ENCODE measurements at regions of chr6 and their contacts with region 1.

Region 1: DNA sequence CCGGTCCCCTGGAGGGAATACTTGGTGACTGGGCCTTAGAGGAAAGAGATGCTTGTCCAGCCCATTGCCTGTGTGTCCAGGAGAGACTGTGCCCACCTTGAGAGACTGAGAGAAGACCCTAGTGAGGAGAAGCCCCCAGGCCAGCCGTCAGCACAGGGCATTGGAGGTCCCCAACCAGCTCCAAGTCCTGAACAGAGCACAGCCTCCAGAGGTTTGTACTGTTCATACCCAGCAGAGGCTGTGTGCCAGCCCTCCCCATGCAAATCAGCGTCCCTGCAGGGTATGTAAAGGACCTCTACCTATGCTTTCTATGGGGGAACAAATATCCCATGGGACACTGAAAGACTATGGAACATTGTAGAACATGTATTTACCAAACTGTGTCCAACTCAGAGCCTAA is 8.4 kb downstream of the HLA-E start:
- DNase-seq: peak in 1 of 4 experiments; percentile 13
- ATAC-seq: no peak
- H3K4me3 ChIP-seq: no peak overlapping the region
- H3K27ac ChIP-seq: no peak overlapping the region
- H3K4me1 ChIP-seq: peaks cover 17 to 29% of the 10 kb centered on the region in 2 experiments
- H3K27me3 ChIP-seq: no peaks in the 10 kb centered on the region
- CTCF ChIP-seq: no peak
- EP300 ChIP-seq: no peak
- POLR2A ChIP-seq: no peak
- RAD21 ChIP-seq: no peak

Region 2: GRCh38 chr6:30515932-30516753 is 18.4 kb after region 1 on chr6:
- CTCF ChIA-PET with region 1: no interaction called
- POLR2A ChIA-PET with region 1: interaction called, 5 read pairs
- in situ Hi-C with region 1: no loop called
- intact Hi-C with region 1: loop called (anchors 1 kb)
- DNase-seq: peak; percentile 91 to 96 (median 94)
- ATAC-seq: peak; percentile 97
- H3K4me3 ChIP-seq: peak overlapping the region; percentile 44
- H3K27ac ChIP-seq: peak overlapping the region; percentile 93
- H3K4me1 ChIP-seq: peaks cover 2 to 10% of the 10 kb centered on the region in 2 experiments; a peak in 3 of 5 replicates
- H3K27me3 ChIP-seq: no peaks in the 10 kb centered on the region
- CTCF ChIP-seq: no peak
- EP300 ChIP-seq: peak; percentile 78; the same call in 1 of the 2 replicates
- POLR2A ChIP-seq: peak; percentile 95
- RAD21 ChIP-seq: peak in 1 of 2 experiments; percentile 3; a peak in 1 of 4 replicates

Region 3: GRCh38 chr6:30533460-30534294 is 36.0 kb after region 1 on chr6:
- CTCF ChIA-PET with region 1: interaction called, 11 read pairs
- POLR2A ChIA-PET with region 1: interaction called, 3 read pairs
- in situ Hi-C with region 1: loop called (anchors 5 kb)
- intact Hi-C with region 1: loop called (anchors 2 kb)
- DNase-seq: no peak
- ATAC-seq: no peak
- H3K4me3 ChIP-seq: no peak overlapping the region
- H3K27ac ChIP-seq: no peak overlapping the region
- H3K4me1 ChIP-seq: peaks cover 7 to 14% of the 10 kb centered on the region in 2 experiments; a peak in 4 of 5 replicates
- H3K27me3 ChIP-seq: no peaks in the 10 kb centered on the region
- CTCF ChIP-seq: no peak; a peak in 1 of 6 replicates
- EP300 ChIP-seq: no peak
- POLR2A ChIP-seq: no peak
- RAD21 ChIP-seq: no peak